PC-3 (cell line): ENCODE measurements at regions of chr7 and their contacts with region 1.

Region 1: DNA sequence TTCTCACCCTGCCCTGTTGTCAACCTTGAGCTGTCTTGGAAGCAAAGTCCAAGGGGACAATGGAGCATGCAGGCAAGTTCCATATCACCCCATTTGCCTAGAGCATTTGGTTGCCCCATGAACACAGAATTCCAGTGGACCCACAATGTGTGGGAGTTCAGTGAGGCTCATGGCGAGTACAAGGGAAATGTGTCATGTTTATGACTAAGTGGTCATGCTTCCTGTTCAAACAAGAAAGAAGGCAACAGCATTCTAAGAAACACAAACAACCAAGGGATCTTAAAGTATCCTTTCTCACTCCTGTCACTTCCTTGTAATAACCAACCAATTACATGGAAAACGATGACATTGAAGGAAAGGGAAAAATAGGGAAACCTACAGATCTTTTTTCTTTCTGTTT is 513.0 kb downstream of the INHBA start:
- DNase-seq: peak; percentile 96
- ATAC-seq: peak; percentile 69
- H3K4me3 ChIP-seq: no peak overlapping the region
- H3K27ac ChIP-seq: peak overlapping the region; percentile 99
- H3K4me1 ChIP-seq: peaks cover 62% of the 10 kb centered on the region
- H3K27me3 ChIP-seq: no peaks in the 10 kb centered on the region
- CTCF ChIP-seq: no peak

Region 2: DNA sequence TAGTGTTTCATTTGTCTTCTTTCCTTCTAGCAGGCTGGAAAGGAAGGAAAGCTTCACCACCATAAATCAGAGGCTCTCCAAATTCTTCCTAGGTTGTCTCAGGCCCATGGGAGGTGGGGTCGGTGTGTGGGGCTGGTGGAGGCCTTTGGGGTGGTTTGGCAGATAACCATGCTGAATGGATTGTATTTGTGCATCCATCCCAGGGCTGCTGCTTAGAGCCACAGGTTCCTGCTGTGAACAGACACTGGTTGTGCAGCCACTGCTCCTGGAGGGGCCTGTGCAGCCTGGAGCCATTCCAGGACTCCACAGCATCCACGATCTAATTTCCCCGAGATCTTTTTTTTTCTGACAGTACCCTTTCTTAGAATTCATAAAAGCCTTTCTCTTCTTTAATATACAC is 313.3 kb before region 1 on chr7:
- CTCF ChIA-PET with region 1: no interaction called
- POLR2A ChIA-PET with region 1: interaction called, 10 read pairs
- intact Hi-C with region 1: no loop called
- DNase-seq: no peak
- ATAC-seq: no peak
- H3K4me3 ChIP-seq: no peak overlapping the region
- H3K27ac ChIP-seq: no peak overlapping the region
- H3K4me1 ChIP-seq: no peaks in the 10 kb centered on the region
- H3K27me3 ChIP-seq: no peaks in the 10 kb centered on the region
- CTCF ChIP-seq: no peak

Region 3: DNA sequence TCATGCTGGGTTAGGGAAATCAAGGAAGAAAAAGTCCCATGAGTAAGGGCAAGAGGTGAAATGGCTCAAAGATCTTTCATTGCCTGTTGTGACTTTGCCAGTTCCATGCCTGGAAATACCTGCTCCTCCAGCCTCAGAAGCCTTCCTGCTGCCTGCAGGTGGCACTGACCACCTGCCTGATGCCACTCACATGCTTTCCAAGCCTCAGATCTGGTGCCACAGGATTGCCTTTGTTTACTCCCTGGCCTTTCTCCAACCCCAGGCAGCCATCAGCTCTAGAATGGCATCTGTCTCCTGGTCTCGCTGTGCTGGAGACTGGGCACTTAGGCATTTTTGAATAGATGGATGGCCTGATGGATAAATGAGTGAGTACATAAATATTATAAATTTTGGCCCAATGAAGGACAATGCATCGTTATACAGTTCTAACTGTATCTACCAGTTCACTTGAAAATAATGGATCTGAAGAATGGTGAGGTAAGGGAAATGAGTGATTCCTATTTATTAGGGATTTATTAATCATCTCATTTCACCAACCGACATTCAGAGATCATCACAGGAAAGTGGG is 144.2 kb before region 1 on chr7:
- CTCF ChIA-PET with region 1: interaction called, 3 read pairs
- POLR2A ChIA-PET with region 1: no interaction called
- intact Hi-C with region 1: loop called (anchors 2 kb)
- DNase-seq: peak; percentile 87
- ATAC-seq: peak; percentile 76
- H3K4me3 ChIP-seq: no peak overlapping the region
- H3K27ac ChIP-seq: peak overlapping the region; percentile 96
- H3K4me1 ChIP-seq: peaks cover 37% of the 10 kb centered on the region
- H3K27me3 ChIP-seq: no peaks in the 10 kb centered on the region
- CTCF ChIP-seq: peak; percentile 83

Region 4: GRCh38 chr7:41148521-41148951 is 41.3 kb before region 1 on chr7:
- CTCF ChIA-PET with region 1: no interaction called
- POLR2A ChIA-PET with region 1: interaction called, 5 read pairs
- intact Hi-C with region 1: loop called (anchors 1 kb)
- DNase-seq: peak; percentile 97
- ATAC-seq: peak; percentile 85
- H3K4me3 ChIP-seq: no peak overlapping the region
- H3K27ac ChIP-seq: peak overlapping the region; percentile 99
- H3K4me1 ChIP-seq: peaks cover 48% of the 10 kb centered on the region
- H3K27me3 ChIP-seq: no peaks in the 10 kb centered on the region
- CTCF ChIP-seq: no peak

Region 5: DNA sequence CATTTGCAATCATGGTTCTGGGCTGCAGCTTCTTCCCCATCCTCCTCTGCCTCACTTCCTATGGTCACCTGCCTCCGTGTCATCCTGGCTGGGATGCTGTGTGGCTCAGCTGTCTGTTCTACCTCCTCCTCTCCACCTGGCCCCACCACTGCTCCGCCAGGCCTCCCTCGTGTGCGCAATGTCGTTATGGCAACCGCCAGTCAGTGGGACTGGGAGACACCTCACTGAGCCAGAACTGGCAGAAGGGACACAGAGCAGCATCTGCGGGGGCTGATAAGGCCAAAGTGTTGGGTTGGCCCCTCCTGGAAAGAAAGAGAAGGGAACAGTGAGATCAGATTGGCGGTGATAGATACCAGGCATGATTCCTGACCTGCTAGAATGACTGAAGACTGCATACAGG is 14.4 kb before region 1 on chr7:
- CTCF ChIA-PET with region 1: no interaction called
- POLR2A ChIA-PET with region 1: no interaction called
- intact Hi-C with region 1: no loop called
- DNase-seq: no peak
- ATAC-seq: no peak
- H3K4me3 ChIP-seq: no peak overlapping the region
- H3K27ac ChIP-seq: no peak overlapping the region
- H3K4me1 ChIP-seq: no peaks in the 10 kb centered on the region
- H3K27me3 ChIP-seq: no peaks in the 10 kb centered on the region
- CTCF ChIP-seq: no peak

Region 6: DNA sequence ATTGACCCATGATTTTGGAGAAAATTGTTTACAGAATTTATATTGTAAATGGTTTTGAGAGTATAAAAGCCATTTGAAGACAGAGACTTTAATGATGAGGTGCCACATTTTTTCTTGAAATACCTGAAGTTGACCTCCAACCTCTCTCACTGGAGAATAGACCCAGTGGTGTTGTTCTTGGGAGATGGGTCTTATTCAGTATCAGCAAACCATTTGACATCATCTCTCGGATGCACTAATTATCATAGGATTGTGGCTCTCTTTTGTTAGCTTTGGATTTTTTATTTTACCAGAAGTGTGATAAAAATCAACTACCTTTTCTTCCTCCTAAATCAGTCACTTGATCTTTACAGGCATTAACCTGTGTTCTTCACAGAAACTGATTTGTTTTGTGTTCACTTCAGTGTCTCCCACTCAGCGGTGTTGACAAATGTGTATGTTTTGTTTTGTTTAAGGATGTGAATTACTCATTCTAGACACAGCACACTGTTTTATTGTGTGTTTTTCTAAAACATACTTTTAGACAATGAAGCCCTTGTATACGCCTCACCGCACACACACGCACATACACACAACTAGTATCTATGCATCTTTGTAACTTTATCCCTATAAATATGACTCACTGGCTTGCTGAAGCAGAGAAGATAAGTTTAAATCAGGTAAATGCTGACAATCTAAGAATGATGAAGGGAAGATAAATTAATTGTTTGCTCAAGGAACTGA is 57.4 kb after region 1 on chr7:
- CTCF ChIA-PET with region 1: no interaction called
- POLR2A ChIA-PET with region 1: no interaction called
- intact Hi-C with region 1: loop called (anchors 1 kb)
- DNase-seq: peak; percentile 96
- ATAC-seq: peak; percentile 92
- H3K4me3 ChIP-seq: no peak overlapping the region
- H3K27ac ChIP-seq: peak overlapping the region; percentile 97
- H3K4me1 ChIP-seq: peaks cover 38% of the 10 kb centered on the region
- H3K27me3 ChIP-seq: no peaks in the 10 kb centered on the region
- CTCF ChIP-seq: no peak

Region 7: DNA sequence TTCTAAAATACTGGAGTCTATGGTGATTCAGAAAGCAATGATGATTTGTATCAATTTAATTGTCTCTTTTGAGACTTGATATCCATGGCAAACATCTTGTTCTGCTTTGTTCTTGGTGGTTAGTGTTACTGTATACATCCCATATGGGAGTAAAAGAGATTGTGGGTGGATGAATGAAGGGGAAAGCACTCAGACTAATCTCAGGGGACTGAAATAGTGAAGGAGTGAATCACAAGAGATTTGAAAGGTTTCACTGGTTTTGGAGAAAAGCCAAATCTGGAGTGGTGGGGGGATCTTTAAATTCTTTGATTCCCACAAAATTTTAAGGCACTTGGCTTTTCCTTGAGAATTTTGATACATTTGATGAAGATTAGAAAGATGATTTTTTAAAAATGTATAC is 143.6 kb after region 1 on chr7:
- CTCF ChIA-PET with region 1: no interaction called
- POLR2A ChIA-PET with region 1: no interaction called
- intact Hi-C with region 1: no loop called
- DNase-seq: no peak
- ATAC-seq: no peak
- H3K4me3 ChIP-seq: no peak overlapping the region
- H3K27ac ChIP-seq: no peak overlapping the region
- H3K4me1 ChIP-seq: peaks cover 14% of the 10 kb centered on the region; the same call in 1 of the 2 replicates
- H3K27me3 ChIP-seq: no peaks in the 10 kb centered on the region
- CTCF ChIP-seq: no peak

Region 8: DNA sequence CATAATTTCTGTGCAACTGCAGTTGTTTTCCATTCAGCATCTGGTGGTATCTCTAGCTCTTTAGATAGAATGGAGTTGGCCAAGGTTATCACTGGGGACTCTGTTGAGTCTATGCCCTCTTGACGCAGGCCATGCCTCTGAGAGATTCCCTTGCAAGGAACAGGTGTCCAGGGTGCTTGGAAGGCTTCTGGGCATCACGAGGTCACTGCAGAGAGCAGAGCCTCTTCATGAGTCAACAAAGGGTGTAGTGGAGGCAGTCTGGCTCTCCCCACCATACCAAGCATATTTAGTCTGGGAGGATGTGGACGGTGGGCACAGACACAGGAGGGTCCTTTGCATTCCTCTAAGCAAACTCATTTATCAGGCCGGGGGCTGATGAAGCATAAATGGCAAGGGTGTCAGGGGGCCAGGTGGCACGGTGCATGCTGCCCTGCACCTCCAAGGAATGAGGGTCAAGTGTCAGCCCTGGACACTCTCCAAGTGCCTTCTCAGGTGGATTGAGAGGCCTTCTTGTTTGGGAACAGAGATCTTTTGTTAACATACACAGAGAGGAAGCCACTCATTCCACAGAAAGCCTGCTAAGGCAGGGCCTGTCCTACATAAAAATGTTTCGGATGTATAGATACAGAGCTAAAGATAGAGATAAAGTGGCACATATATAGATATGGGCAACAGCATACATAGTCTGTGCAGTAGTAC is 184.4 kb after region 1 on chr7:
- CTCF ChIA-PET with region 1: no interaction called
- POLR2A ChIA-PET with region 1: no interaction called
- intact Hi-C with region 1: no loop called
- DNase-seq: no peak
- ATAC-seq: no peak
- H3K4me3 ChIP-seq: no peak overlapping the region
- H3K27ac ChIP-seq: no peak overlapping the region
- H3K4me1 ChIP-seq: no peaks in the 10 kb centered on the region
- H3K27me3 ChIP-seq: no peaks in the 10 kb centered on the region
- CTCF ChIP-seq: no peak

Region 9: GRCh38 chr7:41403291-41403690 is 213.4 kb after region 1 on chr7:
- CTCF ChIA-PET with region 1: no interaction called
- POLR2A ChIA-PET with region 1: interaction called, 5 read pairs
- intact Hi-C with region 1: loop called (anchors 10 kb)
- DNase-seq: peak; percentile 90
- ATAC-seq: peak; percentile 83
- H3K4me3 ChIP-seq: no peak overlapping the region
- H3K27ac ChIP-seq: peak overlapping the region; percentile 72
- H3K4me1 ChIP-seq: peaks cover 33% of the 10 kb centered on the region
- H3K27me3 ChIP-seq: no peaks in the 10 kb centered on the region
- CTCF ChIP-seq: no peak